T-cell (primary cell): ENCODE measurements at regions of chr2 and their contacts with region 1.

Region 1: GRCh38 chr2:170778900-170779299 is 8.7 kb downstream of the ERICH2 start:
- DNase-seq: no peak
- ATAC-seq: no peak
- H3K4me3 ChIP-seq: no peak overlapping the region
- H3K4me3 Mint-ChIP-seq: no peak overlapping the region
- H3K27ac ChIP-seq: no peak overlapping the region
- H3K27ac Mint-ChIP-seq: no peak overlapping the region
- H3K4me1 ChIP-seq: no peaks in the 10 kb centered on the region
- H3K4me1 Mint-ChIP-seq: no peaks in the 10 kb centered on the region
- H3K27me3 ChIP-seq: peaks cover 0 to 5% of the 10 kb centered on the region in 2 experiments
- H3K27me3 Mint-ChIP-seq: peaks cover 10 to 25% of the 10 kb centered on the region in 2 donors

Region 2: GRCh38 chr2:170821531-170822289 is 42.8 kb after region 1 on chr2:
- CTCF ChIA-PET with region 1: interaction called in 1 of 2 experiments, 4 read pairs
- POLR2A ChIA-PET with region 1: interaction called in 1 of 2 experiments, 12 read pairs
- DNase-seq: peak in 2 of 35 experiments; percentile 8 to 15
- ATAC-seq: no peak
- H3K4me3 ChIP-seq: peak overlapping the region; percentile 17 to 55
- H3K4me3 Mint-ChIP-seq: peak overlapping the region; percentile 72 to 87 (median 81)
- H3K27ac ChIP-seq: no peak overlapping the region
- H3K27ac Mint-ChIP-seq: peak overlapping the region in 1 of 2 donors; percentile 31
- H3K4me1 ChIP-seq: peaks cover 11 to 69% of the 10 kb centered on the region in 2 experiments
- H3K4me1 Mint-ChIP-seq: peaks cover 50 to 61% (median 55%) of the 10 kb centered on the region in 3 donors
- H3K27me3 ChIP-seq: peaks cover 16 to 93% of the 10 kb centered on the region in 2 experiments
- H3K27me3 Mint-ChIP-seq: peaks cover 78 to 91% of the 10 kb centered on the region in 2 donors

Region 3: DNA sequence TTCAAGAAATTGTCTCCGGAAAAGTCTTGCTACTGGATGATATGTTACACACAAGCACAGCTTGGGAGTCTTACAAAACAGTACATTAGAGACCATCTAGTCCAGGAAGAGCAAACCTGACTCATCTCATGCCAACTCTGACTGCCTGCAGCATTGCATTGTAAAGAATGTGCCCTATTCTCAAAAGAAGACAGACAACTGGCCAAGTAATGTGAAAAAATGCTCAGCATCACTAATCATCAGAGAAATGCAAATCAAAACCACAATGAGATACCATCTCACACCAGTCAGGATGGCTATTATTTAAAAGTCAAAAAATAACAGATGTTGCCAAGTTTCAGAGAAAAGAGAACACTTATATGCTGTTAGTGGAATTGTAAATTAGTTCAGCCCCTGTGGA is 107.5 kb after region 1 on chr2:
- CTCF ChIA-PET with region 1: no interaction called
- POLR2A ChIA-PET with region 1: no interaction called
- DNase-seq: no peak
- ATAC-seq: no peak
- H3K4me3 ChIP-seq: no peak overlapping the region
- H3K4me3 Mint-ChIP-seq: no peak overlapping the region
- H3K27ac ChIP-seq: no peak overlapping the region
- H3K27ac Mint-ChIP-seq: no peak overlapping the region
- H3K4me1 ChIP-seq: no peaks in the 10 kb centered on the region
- H3K4me1 Mint-ChIP-seq: no peaks in the 10 kb centered on the region
- H3K27me3 ChIP-seq: peaks cover 0 to 17% of the 10 kb centered on the region in 2 experiments
- H3K27me3 Mint-ChIP-seq: peaks cover 20 to 24% of the 10 kb centered on the region in 2 donors